A673 (cell line): ENCODE measurements at regions of chr12 and their contacts with region 1.

Region 1: GRCh38 chr12:127293507-127294310 is 973.3 kb upstream of the TMEM132C start:
- DNase-seq: peak; percentile 89
- H3K4me3 ChIP-seq: no peak overlapping the region
- H3K27ac ChIP-seq: no peak overlapping the region
- H3K4me1 ChIP-seq: peaks cover 14% of the 10 kb centered on the region
- H3K27me3 ChIP-seq: no peaks in the 10 kb centered on the region
- CTCF ChIP-seq: peak; percentile 97

Region 2: DNA sequence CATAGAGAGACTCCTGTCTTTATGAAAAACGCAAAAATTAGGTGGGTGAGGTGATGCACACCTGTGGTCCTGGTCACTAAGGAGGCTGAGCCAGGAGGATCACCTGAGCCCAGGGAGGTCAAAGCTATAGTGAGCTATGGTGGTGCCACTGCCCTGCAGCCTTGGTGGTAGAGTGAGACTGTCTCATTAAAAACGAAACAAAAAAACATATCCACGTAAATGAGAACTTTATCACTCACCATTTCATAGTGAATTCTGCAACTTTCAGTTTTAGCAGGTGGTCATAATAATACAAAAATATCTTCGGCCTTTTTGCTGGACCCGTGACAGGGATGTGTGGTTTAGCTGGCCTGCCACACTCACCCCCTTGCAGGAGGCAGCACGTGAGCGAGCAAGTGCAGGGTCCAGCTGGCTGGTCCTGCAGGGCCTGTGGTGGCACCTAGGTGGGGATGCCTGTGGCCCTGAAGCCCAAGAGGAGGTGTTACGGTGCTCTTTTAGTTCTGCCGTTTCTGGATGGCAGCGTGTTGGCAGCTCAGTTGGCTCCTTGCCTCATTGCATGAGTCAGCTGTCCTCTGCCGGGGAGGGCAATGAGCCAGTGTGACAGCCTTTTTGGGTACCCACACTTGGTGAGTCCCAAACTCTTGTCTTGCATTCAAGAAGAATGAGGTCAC is 357.4 kb before region 1 on chr12:
- CTCF ChIA-PET with region 1: no interaction called
- POLR2A ChIA-PET with region 1: no interaction called
- intact Hi-C with region 1: loop called (anchors 10 kb)
- DNase-seq: peak; percentile 70
- H3K4me3 ChIP-seq: no peak overlapping the region
- H3K27ac ChIP-seq: no peak overlapping the region
- H3K4me1 ChIP-seq: peaks cover 6% of the 10 kb centered on the region
- H3K27me3 ChIP-seq: no peaks in the 10 kb centered on the region
- CTCF ChIP-seq: no peak

Region 3: GRCh38 chr12:127108360-127109215 is 185.1 kb before region 1 on chr12:
- CTCF ChIA-PET with region 1: interaction called, 11 read pairs
- POLR2A ChIA-PET with region 1: no interaction called
- intact Hi-C with region 1: loop called (anchors 2 kb)
- DNase-seq: peak; percentile 85
- H3K4me3 ChIP-seq: no peak overlapping the region
- H3K27ac ChIP-seq: peak overlapping the region; percentile 38
- H3K4me1 ChIP-seq: peaks cover 11% of the 10 kb centered on the region
- H3K27me3 ChIP-seq: no peaks in the 10 kb centered on the region
- CTCF ChIP-seq: peak; percentile 83

Region 4: DNA sequence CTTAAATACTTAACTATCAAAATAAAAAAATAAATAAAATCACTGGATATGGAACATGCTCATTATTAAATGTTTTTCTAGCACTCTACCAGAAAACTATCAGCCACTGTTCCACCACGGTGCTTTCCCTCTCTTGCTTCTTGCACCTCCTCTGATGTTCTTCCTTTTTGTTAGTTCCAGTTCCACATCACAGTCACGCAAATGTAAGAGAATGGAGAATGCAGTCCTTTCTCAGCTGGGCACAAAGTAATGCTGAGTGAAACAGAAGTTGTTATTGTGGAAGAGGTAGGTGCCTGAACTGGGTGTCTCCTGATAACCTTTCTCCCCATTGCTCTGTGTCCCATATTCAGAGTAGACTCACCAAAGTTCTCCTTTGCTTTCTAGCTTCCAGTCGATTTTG is 143.7 kb before region 1 on chr12:
- CTCF ChIA-PET with region 1: no interaction called
- POLR2A ChIA-PET with region 1: no interaction called
- intact Hi-C with region 1: loop called (anchors 2 kb)
- DNase-seq: no peak
- H3K4me3 ChIP-seq: no peak overlapping the region
- H3K27ac ChIP-seq: no peak overlapping the region
- H3K4me1 ChIP-seq: peaks cover 10% of the 10 kb centered on the region
- H3K27me3 ChIP-seq: no peaks in the 10 kb centered on the region
- CTCF ChIP-seq: no peak

Region 5: GRCh38 chr12:127363392-127363791 is 69.7 kb after region 1 on chr12:
- CTCF ChIA-PET with region 1: no interaction called
- POLR2A ChIA-PET with region 1: no interaction called
- intact Hi-C with region 1: no loop called
- DNase-seq: peak; percentile 74
- H3K4me3 ChIP-seq: no peak overlapping the region
- H3K27ac ChIP-seq: no peak overlapping the region
- H3K4me1 ChIP-seq: no peaks in the 10 kb centered on the region
- H3K27me3 ChIP-seq: no peaks in the 10 kb centered on the region
- CTCF ChIP-seq: peak; percentile 67

Region 6: DNA sequence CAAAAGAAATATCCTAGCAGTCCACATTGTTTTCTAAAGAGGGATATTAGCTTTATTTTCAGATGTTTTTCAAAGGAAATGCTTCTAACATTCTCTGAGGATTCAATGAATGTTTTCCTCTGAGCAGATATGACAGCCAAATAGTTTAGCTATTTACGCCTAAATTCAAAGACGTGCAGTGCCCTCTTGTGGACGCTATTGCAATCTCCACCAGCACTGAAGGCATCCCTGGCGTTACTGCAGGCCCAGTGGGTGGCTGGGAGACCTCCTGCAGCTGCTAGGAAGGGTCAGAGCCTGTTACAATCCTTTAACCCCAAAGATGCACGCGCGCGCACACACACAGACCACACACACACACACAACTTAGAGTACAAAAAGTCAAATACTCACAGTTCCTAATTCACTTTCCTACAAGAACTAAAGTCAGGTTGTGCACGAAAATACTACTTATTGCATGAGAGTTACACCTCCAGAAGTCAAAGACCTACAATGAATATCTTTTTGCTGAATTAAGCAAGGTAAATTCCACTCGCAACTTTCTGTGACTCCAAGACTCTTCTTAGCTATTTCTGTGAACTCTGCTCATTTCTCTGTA is 383.9 kb after region 1 on chr12:
- CTCF ChIA-PET with region 1: no interaction called
- POLR2A ChIA-PET with region 1: no interaction called
- intact Hi-C with region 1: loop called (anchors 10 kb)
- DNase-seq: peak; percentile 83
- H3K4me3 ChIP-seq: no peak overlapping the region
- H3K27ac ChIP-seq: no peak overlapping the region
- H3K4me1 ChIP-seq: no peaks in the 10 kb centered on the region
- H3K27me3 ChIP-seq: no peaks in the 10 kb centered on the region
- CTCF ChIP-seq: peak; percentile 91